Activated CD8-positive, alpha-beta T cell treated with anti-CD3 and anti-CD28 coated beads for 36 hours (primary cell): ENCODE measurements at regions of chr1 and their contacts with region 1.

Region 1: GRCh38 chr1:7667625-7668218 is 103.4 kb upstream of the VAMP3 start:
- DNase-seq: peak; percentile 91
- ATAC-seq: peak; percentile 86
- H3K4me3 Mint-ChIP-seq: no peak overlapping the region
- H3K27ac Mint-ChIP-seq: peak overlapping the region; percentile 64
- H3K4me1 Mint-ChIP-seq: peaks cover 4% of the 10 kb centered on the region
- H3K27me3 Mint-ChIP-seq: peaks cover 5% of the 10 kb centered on the region
- CTCF ChIP-seq: peak; percentile 98

Region 2: GRCh38 chr1:7389201-7389905 is 278.4 kb before region 1 on chr1:
- CTCF ChIA-PET with region 1: no interaction called
- POLR2A ChIA-PET with region 1: no interaction called
- intact Hi-C with region 1: no loop called
- DNase-seq: no peak
- ATAC-seq: no peak
- H3K4me3 Mint-ChIP-seq: no peak overlapping the region
- H3K27ac Mint-ChIP-seq: no peak overlapping the region
- H3K4me1 Mint-ChIP-seq: no peaks in the 10 kb centered on the region
- H3K27me3 Mint-ChIP-seq: peaks cover 4% of the 10 kb centered on the region
- CTCF ChIP-seq: no peak

Region 3: GRCh38 chr1:7656557-7657215 is 11.0 kb before region 1 on chr1:
- CTCF ChIA-PET with region 1: interaction called, 17 read pairs
- POLR2A ChIA-PET with region 1: no interaction called
- intact Hi-C with region 1: no loop called
- DNase-seq: no peak
- ATAC-seq: no peak
- H3K4me3 Mint-ChIP-seq: no peak overlapping the region
- H3K27ac Mint-ChIP-seq: no peak overlapping the region
- H3K4me1 Mint-ChIP-seq: no peaks in the 10 kb centered on the region
- H3K27me3 Mint-ChIP-seq: no peaks in the 10 kb centered on the region
- CTCF ChIP-seq: no peak

Region 4: GRCh38 chr1:7698641-7699040 is 30.9 kb after region 1 on chr1:
- CTCF ChIA-PET with region 1: interaction called, 21 read pairs
- POLR2A ChIA-PET with region 1: no interaction called
- intact Hi-C with region 1: no loop called
- DNase-seq: no peak
- ATAC-seq: peak; percentile 45
- H3K4me3 Mint-ChIP-seq: no peak overlapping the region
- H3K27ac Mint-ChIP-seq: no peak overlapping the region
- H3K4me1 Mint-ChIP-seq: peaks cover 9% of the 10 kb centered on the region
- H3K27me3 Mint-ChIP-seq: peaks cover 24% of the 10 kb centered on the region
- CTCF ChIP-seq: no peak

Region 5: DNA sequence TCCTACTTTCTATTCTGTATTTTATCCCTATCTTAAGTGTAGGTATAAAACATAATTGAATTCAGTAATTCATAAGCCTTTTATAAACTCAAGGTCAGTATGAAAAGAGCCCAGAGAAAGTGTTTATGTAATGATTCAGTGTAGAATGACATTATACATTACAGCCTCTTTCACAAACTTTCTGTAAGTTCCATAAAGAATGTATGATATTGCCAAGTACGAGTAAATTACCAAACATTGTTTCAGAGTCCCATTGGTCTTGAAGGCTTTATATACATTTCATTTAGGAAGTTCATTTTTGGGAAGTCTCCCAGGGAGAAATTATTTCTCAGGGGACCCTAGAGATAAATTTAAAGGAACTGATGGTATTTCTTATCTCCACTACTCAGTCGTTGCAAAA is 65.6 kb after region 1 on chr1:
- CTCF ChIA-PET with region 1: interaction called, 21 read pairs
- POLR2A ChIA-PET with region 1: no interaction called
- intact Hi-C with region 1: no loop called
- DNase-seq: no peak
- ATAC-seq: no peak
- H3K4me3 Mint-ChIP-seq: no peak overlapping the region
- H3K27ac Mint-ChIP-seq: no peak overlapping the region
- H3K4me1 Mint-ChIP-seq: no peaks in the 10 kb centered on the region
- H3K27me3 Mint-ChIP-seq: peaks cover 8% of the 10 kb centered on the region
- CTCF ChIP-seq: no peak

Region 6: GRCh38 chr1:7760245-7760644 is 92.5 kb after region 1 on chr1:
- CTCF ChIA-PET with region 1: interaction called, 589 read pairs
- POLR2A ChIA-PET with region 1: no interaction called
- intact Hi-C with region 1: no loop called
- DNase-seq: no peak
- ATAC-seq: no peak
- H3K4me3 Mint-ChIP-seq: no peak overlapping the region
- H3K27ac Mint-ChIP-seq: no peak overlapping the region
- H3K4me1 Mint-ChIP-seq: no peaks in the 10 kb centered on the region
- H3K27me3 Mint-ChIP-seq: peaks cover 2% of the 10 kb centered on the region
- CTCF ChIP-seq: no peak

Region 7: DNA sequence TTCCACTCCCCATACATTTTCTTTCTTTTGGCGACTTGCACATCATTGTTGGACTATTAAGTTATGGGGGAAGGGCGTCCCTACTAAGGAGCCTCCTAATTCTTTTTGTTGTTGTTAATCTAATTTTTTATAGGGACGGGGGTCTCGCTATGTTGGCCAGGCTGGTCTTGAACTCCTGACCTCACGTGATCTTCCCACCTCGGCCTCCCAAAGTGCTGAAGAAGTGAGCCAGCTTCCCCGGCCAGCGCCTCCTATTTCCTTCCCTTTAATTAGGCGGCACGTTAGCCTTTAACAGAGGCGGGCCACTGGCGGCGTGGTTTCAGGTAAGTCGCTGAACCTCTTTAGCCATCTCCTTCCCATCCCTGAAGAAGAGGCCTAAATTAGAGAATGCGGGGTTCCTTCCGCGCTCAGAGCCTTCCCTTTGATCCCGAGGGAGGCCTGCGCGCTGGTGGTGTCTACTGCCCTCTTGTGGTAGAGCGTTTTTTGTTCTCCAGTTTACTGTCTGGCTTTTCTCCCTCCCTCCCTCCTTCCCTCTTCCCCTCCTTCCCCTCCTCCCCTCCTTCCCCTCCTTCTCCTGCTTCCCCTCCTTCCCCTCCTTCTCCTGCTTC is 234.9 kb after region 1 on chr1:
- CTCF ChIA-PET with region 1: interaction called, 19 read pairs
- POLR2A ChIA-PET with region 1: no interaction called
- intact Hi-C with region 1: loop called (anchors 10 kb)
- DNase-seq: peak; percentile 68
- ATAC-seq: peak; percentile 75
- H3K4me3 Mint-ChIP-seq: peak overlapping the region; percentile 38
- H3K27ac Mint-ChIP-seq: no peak overlapping the region
- H3K4me1 Mint-ChIP-seq: peaks cover 16% of the 10 kb centered on the region
- H3K27me3 Mint-ChIP-seq: no peaks in the 10 kb centered on the region
- CTCF ChIP-seq: peak; percentile 80